Activated naive CD4-positive, alpha-beta T cell treated with anti-CD3 and anti-CD28 coated beads for 36 hours (primary cell): ENCODE measurements at regions of chr18 and their contacts with region 1.

Region 1: GRCh38 chr18:74063023-74063422 is 84.6 kb downstream of the FBXO15 start:
- DNase-seq: peak; percentile 75
- H3K4me3 Mint-ChIP-seq: peak overlapping the region; percentile 3
- H3K27ac Mint-ChIP-seq: peak overlapping the region; percentile 88
- H3K4me1 Mint-ChIP-seq: peaks cover 40% of the 10 kb centered on the region
- H3K27me3 Mint-ChIP-seq: no peaks in the 10 kb centered on the region

Region 2: GRCh38 chr18:73859837-73860397 is 203.1 kb before region 1 on chr18:
- CTCF ChIA-PET with region 1: no interaction called
- intact Hi-C with region 1: no loop called
- DNase-seq: no peak
- H3K4me3 Mint-ChIP-seq: no peak overlapping the region
- H3K27ac Mint-ChIP-seq: no peak overlapping the region
- H3K4me1 Mint-ChIP-seq: no peaks in the 10 kb centered on the region
- H3K27me3 Mint-ChIP-seq: no peaks in the 10 kb centered on the region

Region 3: DNA sequence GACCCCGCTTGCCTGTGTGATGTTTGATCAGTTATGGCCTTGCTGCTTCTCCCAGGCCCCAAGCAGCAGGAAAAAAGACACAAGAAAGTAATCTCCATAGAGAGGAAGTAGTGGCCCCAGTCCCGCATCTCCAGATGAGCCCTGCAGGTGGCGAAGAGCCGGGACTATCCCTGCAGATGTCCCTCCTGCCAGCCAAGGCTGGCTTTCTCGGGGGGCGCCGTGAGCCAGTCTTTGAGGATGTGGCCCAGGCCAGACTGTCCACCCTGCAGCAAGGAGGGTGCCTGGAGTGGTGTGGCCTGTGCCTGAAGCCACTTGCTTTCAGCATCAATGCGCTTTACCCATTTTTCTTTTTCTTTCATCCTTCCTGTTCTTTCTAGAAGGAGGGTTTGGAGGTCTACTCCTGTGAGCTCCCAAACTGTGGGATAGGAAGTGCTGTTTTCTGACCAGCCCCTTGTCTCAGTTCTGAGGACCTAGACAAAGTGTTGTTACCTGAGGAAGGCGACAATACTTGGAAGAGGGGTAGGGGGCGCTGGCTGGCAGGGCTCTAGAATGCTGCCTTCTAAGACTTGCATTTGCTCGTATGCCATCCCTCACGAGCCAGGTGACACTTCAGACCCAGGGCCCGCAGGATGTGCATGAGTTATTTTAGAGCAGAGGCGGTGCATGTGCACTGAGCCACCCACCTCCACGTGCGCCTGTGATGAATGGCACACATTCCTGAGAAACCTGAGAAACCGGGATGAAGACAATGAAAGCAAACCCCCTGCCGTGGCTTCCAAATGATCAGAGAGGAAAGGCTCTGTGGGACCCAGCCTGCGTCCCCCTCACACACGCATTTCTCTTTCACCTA is 171.2 kb before region 1 on chr18:
- CTCF ChIA-PET with region 1: no interaction called
- intact Hi-C with region 1: no loop called
- DNase-seq: peak; percentile 20
- H3K4me3 Mint-ChIP-seq: no peak overlapping the region
- H3K27ac Mint-ChIP-seq: no peak overlapping the region
- H3K4me1 Mint-ChIP-seq: no peaks in the 10 kb centered on the region
- H3K27me3 Mint-ChIP-seq: peaks cover 7% of the 10 kb centered on the region

Region 4: DNA sequence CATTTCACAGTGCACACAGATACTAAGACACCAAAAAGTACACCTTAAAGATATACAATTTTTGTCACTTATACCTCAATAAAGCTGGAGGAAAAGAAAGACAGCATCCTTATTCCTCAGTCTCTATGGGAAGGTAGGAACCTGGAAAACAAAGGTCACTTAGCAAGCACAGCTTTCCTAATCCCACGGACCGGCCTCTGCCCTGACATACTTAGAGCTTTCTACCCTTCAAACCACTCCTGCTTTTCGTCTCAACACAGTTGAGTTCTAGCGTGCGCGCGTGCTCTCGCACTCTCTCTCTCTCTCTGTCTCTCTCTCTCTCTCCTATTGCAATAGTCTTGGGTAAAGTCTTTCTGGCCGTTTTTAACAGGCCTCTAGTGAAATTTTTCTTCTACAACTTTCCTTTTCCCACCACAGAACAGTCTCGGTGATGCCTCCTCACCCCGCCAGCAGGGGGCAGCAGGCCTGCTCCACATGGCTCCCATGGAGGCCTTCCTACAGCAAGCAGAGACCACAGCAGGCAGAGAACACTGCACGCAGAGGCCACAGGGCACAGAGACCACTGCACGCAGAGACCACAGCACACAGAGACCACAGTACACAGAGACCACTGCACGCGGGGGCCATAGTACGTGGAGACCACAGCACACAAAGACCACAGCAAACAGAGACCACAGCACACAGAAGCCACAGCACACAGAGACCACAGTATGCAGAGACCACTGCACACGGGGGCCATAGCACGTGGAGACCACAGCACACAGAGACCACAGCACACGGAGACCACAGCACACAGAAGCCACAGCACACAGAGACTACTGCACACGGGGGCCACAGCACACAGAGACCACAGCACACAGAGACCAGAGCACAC is 22.3 kb before region 1 on chr18:
- CTCF ChIA-PET with region 1: interaction called, 15 read pairs
- intact Hi-C with region 1: loop called (anchors 1 kb)
- DNase-seq: peak; percentile 87
- H3K4me3 Mint-ChIP-seq: no peak overlapping the region
- H3K27ac Mint-ChIP-seq: no peak overlapping the region
- H3K4me1 Mint-ChIP-seq: no peaks in the 10 kb centered on the region
- H3K27me3 Mint-ChIP-seq: peaks cover 2% of the 10 kb centered on the region

Region 5: DNA sequence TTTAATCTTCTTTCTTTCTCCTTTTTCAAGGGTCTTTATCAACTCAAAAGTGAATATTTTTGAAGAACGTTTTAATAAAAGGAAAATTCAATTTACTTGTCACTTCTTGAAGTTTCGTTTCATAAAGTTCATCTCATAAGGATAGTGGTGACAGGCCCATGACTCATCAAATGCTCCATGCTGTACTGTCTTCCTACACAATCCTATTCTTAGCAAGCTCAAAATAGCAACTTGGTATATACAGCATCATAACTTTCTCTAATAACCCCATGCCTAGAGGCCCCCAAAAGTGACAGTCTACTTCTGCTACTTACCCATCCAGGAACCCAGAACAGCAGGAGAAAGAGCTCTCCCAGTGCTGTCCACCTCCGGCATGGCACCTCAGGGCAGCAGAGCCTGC is 76.9 kb after region 1 on chr18:
- CTCF ChIA-PET with region 1: no interaction called
- intact Hi-C with region 1: loop called (anchors 1 kb)
- DNase-seq: peak; percentile 73
- H3K4me3 Mint-ChIP-seq: peak overlapping the region; percentile 27
- H3K27ac Mint-ChIP-seq: peak overlapping the region; percentile 88
- H3K4me1 Mint-ChIP-seq: peaks cover 42% of the 10 kb centered on the region
- H3K27me3 Mint-ChIP-seq: peaks cover 2% of the 10 kb centered on the region

Region 6: GRCh38 chr18:74147779-74148542 is 84.9 kb after region 1 on chr18 and contains the starts of genes FBXO15 and TIMM21:
- CTCF ChIA-PET with region 1: interaction called, 3 read pairs
- intact Hi-C with region 1: loop called (anchors 1 kb)
- DNase-seq: peak; percentile 95
- H3K4me3 Mint-ChIP-seq: peak within 1 kb of the TSS; percentile 96
- H3K27ac Mint-ChIP-seq: peak within 1 kb of the TSS; percentile 97
- H3K4me1 Mint-ChIP-seq: peaks cover 42% of the 10 kb centered on the region
- H3K27me3 Mint-ChIP-seq: no peaks in the 10 kb centered on the region
- total RNA-seq, gene FBXO15: 1.2 to 1.3 TPM
- total RNA-seq, gene TIMM21: 35.6 to 37.7 TPM

Region 7: DNA sequence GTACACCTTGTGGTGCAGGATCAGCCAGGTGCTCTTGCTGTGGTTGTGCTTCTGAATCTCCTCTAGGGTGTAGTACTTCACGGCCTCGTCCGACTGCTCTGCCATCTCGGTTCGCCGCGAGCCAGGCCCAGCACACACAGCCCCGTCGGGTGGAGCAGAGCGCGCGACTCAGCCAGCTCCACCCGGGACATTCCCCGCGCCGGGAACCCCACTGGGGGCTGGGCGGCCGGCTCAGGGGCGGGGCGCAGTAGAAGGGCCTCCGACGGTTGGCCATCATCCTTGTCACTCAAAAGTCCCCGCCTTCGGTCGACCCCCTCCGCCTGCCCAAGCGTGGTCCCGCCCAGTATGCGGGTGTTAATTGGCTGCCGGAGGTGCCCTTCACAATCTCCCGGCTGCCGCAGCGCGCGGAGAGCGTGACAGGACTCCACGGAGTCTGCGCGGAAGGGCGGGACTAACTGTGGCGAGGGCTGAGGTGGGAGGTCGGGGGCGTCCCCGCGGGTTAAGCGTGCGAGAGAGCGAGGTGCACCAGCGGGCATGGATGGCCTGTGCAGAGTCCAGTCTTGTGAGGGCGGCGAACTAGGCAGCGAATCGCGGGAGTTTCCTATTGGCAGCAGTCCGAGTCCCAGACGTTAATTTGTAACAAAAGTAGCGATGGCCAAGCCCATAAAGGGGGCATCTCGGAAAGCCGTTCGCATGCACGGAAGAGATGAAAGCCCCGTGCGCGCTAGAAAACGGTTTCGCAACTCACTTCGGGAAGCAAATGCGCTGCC is 228.9 kb after region 1 on chr18 and contains the start of gene CYB5A:
- CTCF ChIA-PET with region 1: no interaction called
- intact Hi-C with region 1: loop called (anchors 2 kb)
- DNase-seq: peak; percentile 99
- H3K4me3 Mint-ChIP-seq: no peak within 1 kb of the TSS
- H3K27ac Mint-ChIP-seq: peak within 1 kb of the TSS; percentile 59
- H3K4me1 Mint-ChIP-seq: peaks cover 20% of the 10 kb centered on the region
- H3K27me3 Mint-ChIP-seq: no peaks in the 10 kb centered on the region
- total RNA-seq, gene CYB5A: 77.8 to 78.3 TPM

Region 8: DNA sequence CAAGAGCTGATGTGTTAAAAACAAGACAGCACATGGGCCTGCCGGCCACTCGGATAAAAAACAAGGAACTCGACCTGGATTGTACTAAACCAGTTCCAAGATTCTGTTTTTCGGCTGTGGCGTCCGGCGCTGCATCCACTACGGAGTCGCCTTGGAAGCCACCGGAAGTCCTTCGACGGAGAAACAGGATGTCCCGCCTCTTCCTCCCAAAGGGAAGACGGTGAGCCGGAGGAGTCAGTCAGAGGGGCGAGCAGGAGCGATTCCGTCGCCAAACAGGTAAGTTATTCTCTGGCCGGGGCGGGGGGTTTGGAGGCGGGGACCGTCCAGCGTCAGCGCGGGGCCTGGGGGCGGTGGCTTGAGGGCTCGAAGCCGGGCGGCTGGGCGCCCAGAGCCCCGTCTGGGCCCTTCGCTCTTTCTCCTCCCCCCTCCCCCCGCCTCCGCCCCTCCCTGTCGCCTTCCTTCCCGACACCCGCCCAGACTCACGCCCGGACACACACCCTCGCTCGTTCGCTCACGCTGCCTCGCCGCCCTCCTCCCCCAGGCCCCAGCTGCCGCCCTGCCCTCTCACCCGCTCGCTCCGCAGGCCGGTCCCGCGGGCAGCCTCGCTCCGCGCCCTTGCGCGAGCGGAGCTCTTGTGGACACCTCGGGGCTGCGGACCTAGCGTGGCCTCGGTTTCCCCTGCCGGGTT is 534.8 kb after region 1 on chr18 and contains the start of gene ZNF407:
- CTCF ChIA-PET with region 1: no interaction called
- intact Hi-C with region 1: loop called (anchors 5 kb)
- DNase-seq: peak; percentile 91
- H3K4me3 Mint-ChIP-seq: peak within 1 kb of the TSS; percentile 86
- H3K27ac Mint-ChIP-seq: peak within 1 kb of the TSS; percentile 98
- H3K4me1 Mint-ChIP-seq: peaks cover 38% of the 10 kb centered on the region
- H3K27me3 Mint-ChIP-seq: no peaks in the 10 kb centered on the region
- total RNA-seq, gene ZNF407: 9.8 to 9.9 TPM